ENCODE measurements at regions of chr19 and their contacts with region 1.

Region 1: GRCh38 chr19:57362997-57363705 is at the starts of genes TRAPPC2B and ZNF547:
- DNase-seq: peak; percentile 89 to 99 (median 98)
- ATAC-seq: peak; percentile 97
- H3K4me3 ChIP-seq: peak within 1 kb of the TSS; percentile 74
- H3K4me3 Mint-ChIP-seq: peak within 1 kb of the TSS; percentile 90 to 97 (median 94)
- H3K27ac ChIP-seq: peak within 1 kb of the TSS; percentile 84
- H3K27ac Mint-ChIP-seq: peak within 1 kb of the TSS; percentile 94 to 100 (median 97)
- H3K4me1 ChIP-seq: peaks cover 9 to 14% of the 10 kb centered on the region in 2 donors
- H3K4me1 Mint-ChIP-seq: peaks cover 12 to 26% (median 18%) of the 10 kb centered on the region in 7 donors
- H3K27me3 ChIP-seq: no peaks in the 10 kb centered on the region
- H3K27me3 Mint-ChIP-seq: peaks cover 0 to 2% (median 0%) of the 10 kb centered on the region in 5 donors
- total RNA-seq, gene TRAPPC2B: 7.7 to 11.8 (median 9.0) TPM
- total RNA-seq, gene ZNF547: 0.40 to 10.1 (median 3.6) TPM

Region 2: GRCh38 chr19:57191141-57192076 is 171.7 kb before region 1 on chr19 and contains the start of gene ZNF264:
- CTCF ChIA-PET with region 1: no interaction called
- POLR2A ChIA-PET with region 1: no interaction called
- intact Hi-C with region 1: loop called (anchors 1 kb)
- DNase-seq: peak; percentile 79 to 90 (median 86)
- ATAC-seq: peak; percentile 98
- H3K4me3 ChIP-seq: peak within 1 kb of the TSS; percentile 95
- H3K4me3 Mint-ChIP-seq: peak within 1 kb of the TSS; percentile 90 to 97 (median 94)
- H3K27ac ChIP-seq: peak within 1 kb of the TSS; percentile 85
- H3K27ac Mint-ChIP-seq: peak within 1 kb of the TSS; percentile 92 to 97 (median 95)
- H3K4me1 ChIP-seq: peaks cover 11 to 22% of the 10 kb centered on the region in 2 donors
- H3K4me1 Mint-ChIP-seq: peaks cover 20 to 40% (median 35%) of the 10 kb centered on the region in 7 donors
- H3K27me3 ChIP-seq: no peaks in the 10 kb centered on the region
- H3K27me3 Mint-ChIP-seq: peaks cover 0 to 11% (median 6%) of the 10 kb centered on the region in 5 donors
- total RNA-seq, gene ZNF264: 31.5 to 65.9 (median 44.3) TPM

Region 3: GRCh38 chr19:57350877-57351805 is 12.0 kb before region 1 on chr19 and contains the start of gene ZNF304:
- CTCF ChIA-PET with region 1: no interaction called
- POLR2A ChIA-PET with region 1: interaction called, 4 read pairs
- intact Hi-C with region 1: loop called (anchors 1 kb)
- DNase-seq: peak; percentile 51 to 85 (median 76)
- ATAC-seq: peak; percentile 100
- H3K4me3 ChIP-seq: peak within 1 kb of the TSS; percentile 83
- H3K4me3 Mint-ChIP-seq: peak within 1 kb of the TSS; percentile 93 to 97 (median 96)
- H3K27ac ChIP-seq: peak within 1 kb of the TSS; percentile 77
- H3K27ac Mint-ChIP-seq: peak within 1 kb of the TSS; percentile 80 to 96 (median 92)
- H3K4me1 ChIP-seq: peaks cover 11% of the 10 kb centered on the region in 2 donors
- H3K4me1 Mint-ChIP-seq: peaks cover 28 to 43% (median 32%) of the 10 kb centered on the region in 7 donors
- H3K27me3 ChIP-seq: no peaks in the 10 kb centered on the region
- H3K27me3 Mint-ChIP-seq: peaks cover 0 to 11% (median 7%) of the 10 kb centered on the region in 5 donors
- total RNA-seq, gene ZNF304: 6.0 to 12.5 (median 9.0) TPM

Region 4: GRCh38 chr19:57443120-57443696 is 80.1 kb after region 1 on chr19:
- CTCF ChIA-PET with region 1: no interaction called
- POLR2A ChIA-PET with region 1: no interaction called
- intact Hi-C with region 1: no loop called
- DNase-seq: no peak
- ATAC-seq: no peak
- H3K4me3 ChIP-seq: no peak overlapping the region
- H3K4me3 Mint-ChIP-seq: peak overlapping the region in 1 of 10 donors; percentile 19
- H3K27ac ChIP-seq: no peak overlapping the region
- H3K27ac Mint-ChIP-seq: no peak overlapping the region
- H3K4me1 ChIP-seq: no peaks in the 10 kb centered on the region
- H3K4me1 Mint-ChIP-seq: peaks cover 0 to 19% (median 16%) of the 10 kb centered on the region in 7 donors
- H3K27me3 ChIP-seq: no peaks in the 10 kb centered on the region
- H3K27me3 Mint-ChIP-seq: no peaks in the 10 kb centered on the region

Region 5: GRCh38 chr19:57477191-57478008 is 114.2 kb after region 1 on chr19 and contains the start of gene ZNF772:
- CTCF ChIA-PET with region 1: no interaction called
- POLR2A ChIA-PET with region 1: no interaction called
- intact Hi-C with region 1: loop called in 1 of 2 experiments (anchors 1 kb)
- DNase-seq: peak; percentile 55 to 96 (median 88)
- ATAC-seq: peak; percentile 99
- H3K4me3 ChIP-seq: peak within 1 kb of the TSS; percentile 80
- H3K4me3 Mint-ChIP-seq: peak within 1 kb of the TSS; percentile 87 to 95 (median 92)
- H3K27ac ChIP-seq: peak within 1 kb of the TSS; percentile 77
- H3K27ac Mint-ChIP-seq: peak within 1 kb of the TSS; percentile 84 to 96 (median 89)
- H3K4me1 ChIP-seq: peaks cover 5 to 12% of the 10 kb centered on the region in 2 donors
- H3K4me1 Mint-ChIP-seq: peaks cover 10 to 26% (median 19%) of the 10 kb centered on the region in 7 donors
- H3K27me3 ChIP-seq: no peaks in the 10 kb centered on the region
- H3K27me3 Mint-ChIP-seq: peaks cover 0 to 7% (median 0%) of the 10 kb centered on the region in 5 donors
- total RNA-seq, gene ZNF772: 1.5 to 20.5 (median 4.3) TPM

Region 6: DNA sequence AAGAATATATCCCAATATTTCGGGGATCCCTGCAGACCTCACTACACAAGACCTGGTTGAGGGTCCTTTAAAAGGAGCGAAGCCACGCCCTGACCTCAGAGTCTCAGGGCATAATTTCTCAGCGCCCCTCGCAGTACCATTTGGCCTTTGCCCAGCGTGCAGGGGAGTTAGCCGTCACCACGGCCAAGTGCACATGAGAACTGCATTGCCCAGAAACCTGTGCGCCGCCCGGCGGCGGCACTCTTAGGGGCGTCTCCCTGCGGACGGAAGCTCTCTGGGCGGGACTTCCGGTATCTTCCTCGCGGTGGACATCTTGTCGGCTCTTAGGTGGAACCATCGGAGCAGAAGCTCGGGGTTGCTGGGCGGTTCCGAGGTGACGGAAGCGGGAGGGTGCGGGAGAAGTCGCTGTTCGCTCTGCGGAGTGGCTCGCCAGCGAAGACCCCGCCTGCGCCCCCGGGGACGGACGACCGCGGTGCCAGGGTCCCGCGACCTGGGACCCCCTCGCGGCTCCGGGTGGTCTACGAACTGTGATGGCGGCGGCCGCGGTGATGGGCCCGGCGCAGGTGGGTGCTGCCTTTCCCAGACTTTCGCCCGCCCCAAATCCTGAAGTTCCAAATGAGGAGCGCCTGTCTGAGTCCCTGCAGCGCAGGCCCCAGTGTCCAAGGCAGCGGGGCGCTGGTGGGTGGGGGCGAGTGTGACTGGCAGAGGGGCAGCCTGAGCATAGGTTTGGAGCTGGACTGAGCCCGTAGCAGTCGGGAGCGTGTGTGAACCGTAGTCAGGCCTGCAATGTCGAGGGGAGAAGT is 251.0 kb after region 1 on chr19 and contains the start of gene ZNF134:
- CTCF ChIA-PET with region 1: no interaction called
- POLR2A ChIA-PET with region 1: no interaction called
- intact Hi-C with region 1: loop called in 1 of 2 experiments (anchors 1 kb)
- DNase-seq: peak; percentile 74 to 90 (median 84)
- ATAC-seq: peak; percentile 100
- H3K4me3 ChIP-seq: peak within 1 kb of the TSS; percentile 94
- H3K4me3 Mint-ChIP-seq: peak within 1 kb of the TSS; percentile 79 to 95 (median 90)
- H3K27ac ChIP-seq: peak within 1 kb of the TSS; percentile 76
- H3K27ac Mint-ChIP-seq: peak within 1 kb of the TSS; percentile 78 to 92 (median 86)
- H3K4me1 ChIP-seq: peaks cover 14 to 15% of the 10 kb centered on the region in 2 donors
- H3K4me1 Mint-ChIP-seq: peaks cover 18 to 43% (median 34%) of the 10 kb centered on the region in 7 donors
- H3K27me3 ChIP-seq: no peaks in the 10 kb centered on the region
- H3K27me3 Mint-ChIP-seq: no peaks in the 10 kb centered on the region
- total RNA-seq, gene ZNF134: 14.6 to 33.9 (median 25.7) TPM

Region 7: DNA sequence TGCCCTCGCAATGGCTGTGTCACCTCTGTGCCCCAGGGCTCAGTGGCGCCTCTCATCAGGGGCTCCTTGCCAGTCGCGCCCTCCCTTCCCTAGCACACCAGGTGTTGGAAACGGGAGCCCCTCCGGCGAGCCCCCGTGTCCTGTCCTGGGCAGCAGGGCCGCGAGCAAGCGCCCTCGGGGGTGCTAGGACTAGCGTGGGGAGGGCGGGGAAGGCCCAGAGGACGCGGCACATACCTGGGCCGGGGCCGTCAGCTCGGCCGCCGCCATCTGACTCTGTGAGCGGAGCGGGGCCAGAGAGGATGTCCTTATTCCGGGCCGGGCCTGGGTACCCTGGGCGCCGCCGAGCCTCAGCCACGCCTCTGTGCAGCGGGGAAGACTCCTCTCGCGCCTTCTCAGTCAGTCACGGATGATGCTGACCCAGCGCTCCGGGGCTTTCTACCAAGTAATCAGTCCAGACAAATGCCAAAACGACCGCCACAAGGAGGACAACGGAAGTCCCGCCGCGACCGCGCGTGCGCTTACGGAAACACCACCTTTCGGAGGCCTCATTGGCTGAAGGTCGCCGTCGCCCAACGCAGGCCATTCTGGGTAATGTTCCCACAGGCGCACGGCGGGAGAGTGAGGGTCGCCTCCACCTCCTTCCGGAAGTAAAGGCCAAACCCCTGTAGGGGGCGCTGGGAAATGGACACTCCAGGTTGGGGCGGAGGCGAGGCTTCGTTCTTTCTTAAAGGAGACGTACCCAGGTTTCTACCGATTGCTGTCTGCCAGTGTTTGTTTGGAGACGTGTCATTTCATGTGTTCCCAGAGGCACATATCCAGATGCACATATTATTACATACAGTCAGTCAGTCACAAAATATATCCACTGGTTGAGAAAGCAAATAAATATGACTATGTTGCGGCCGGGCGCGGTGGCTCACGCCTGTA is 584.3 kb after region 1 on chr19 and contains the start of gene ZNF256:
- CTCF ChIA-PET with region 1: no interaction called
- POLR2A ChIA-PET with region 1: no interaction called
- intact Hi-C with region 1: loop called in 1 of 2 experiments (anchors 5 kb)
- DNase-seq: peak; percentile 55 to 85 (median 77)
- ATAC-seq: peak; percentile 97
- H3K4me3 ChIP-seq: peak within 1 kb of the TSS; percentile 71
- H3K4me3 Mint-ChIP-seq: peak within 1 kb of the TSS; percentile 89 to 97 (median 95)
- H3K27ac ChIP-seq: peak within 1 kb of the TSS; percentile 80
- H3K27ac Mint-ChIP-seq: peak within 1 kb of the TSS; percentile 83 to 97 (median 92)
- H3K4me1 ChIP-seq: peaks cover 6 to 9% of the 10 kb centered on the region in 2 donors
- H3K4me1 Mint-ChIP-seq: peaks cover 10 to 28% (median 21%) of the 10 kb centered on the region in 7 donors
- H3K27me3 ChIP-seq: no peaks in the 10 kb centered on the region
- H3K27me3 Mint-ChIP-seq: peaks cover 0 to 4% (median 0%) of the 10 kb centered on the region in 5 donors
- total RNA-seq, gene ZNF256: 5.2 to 13.8 (median 11.8) TPM

Region 8: DNA sequence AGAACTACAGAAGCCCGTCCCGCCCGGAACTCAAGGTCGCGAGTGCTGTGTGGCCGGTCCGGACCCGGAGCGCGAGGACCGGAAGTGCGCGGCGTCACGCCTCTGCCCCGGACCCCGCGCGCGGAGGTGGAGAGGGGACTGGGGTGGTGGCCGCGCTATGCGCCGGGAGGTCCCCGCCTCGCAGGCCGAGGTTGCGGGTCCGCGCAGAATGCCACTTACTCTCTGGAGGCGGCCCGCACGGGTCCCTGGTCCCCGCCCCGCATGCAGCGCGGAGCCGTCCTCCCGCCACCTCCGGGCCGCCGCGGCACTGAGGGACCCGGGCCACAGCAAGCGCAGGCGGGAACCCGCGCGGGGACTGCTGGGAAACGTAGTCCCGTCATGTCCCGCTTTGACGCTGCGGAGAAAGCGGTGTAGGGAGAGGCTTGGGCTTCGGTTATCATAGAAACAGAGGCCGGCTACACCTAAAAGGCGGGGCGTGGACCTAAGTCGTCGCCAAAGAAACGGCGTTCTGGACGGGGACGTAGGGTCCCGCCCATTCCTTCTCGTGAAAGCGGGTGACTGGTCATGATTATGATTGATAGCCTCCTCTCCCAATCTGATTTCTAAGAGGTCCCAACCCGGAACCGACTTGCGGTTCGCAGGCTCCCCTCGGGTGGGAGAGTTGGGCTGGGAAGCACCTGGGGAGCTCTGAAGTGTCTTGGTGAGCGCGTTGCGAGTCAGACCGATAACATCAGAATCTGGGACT is 1017.7 kb after region 1 on chr19 and contains the start of gene ZNF837:
- CTCF ChIA-PET with region 1: no interaction called
- POLR2A ChIA-PET with region 1: no interaction called
- intact Hi-C with region 1: loop called in 1 of 2 experiments (anchors 1 kb)
- DNase-seq: peak; percentile 90 to 100 (median 98)
- ATAC-seq: peak; percentile 93
- H3K4me3 ChIP-seq: peak within 1 kb of the TSS; percentile 97
- H3K4me3 Mint-ChIP-seq: peak within 1 kb of the TSS; percentile 87 to 98 (median 91)
- H3K27ac ChIP-seq: peak within 1 kb of the TSS; percentile 96
- H3K27ac Mint-ChIP-seq: peak within 1 kb of the TSS; percentile 93 to 97 (median 97)
- H3K4me1 ChIP-seq: peaks cover 21 to 25% of the 10 kb centered on the region in 2 donors
- H3K4me1 Mint-ChIP-seq: peaks cover 23 to 40% (median 34%) of the 10 kb centered on the region in 7 donors
- H3K27me3 ChIP-seq: no peaks in the 10 kb centered on the region
- H3K27me3 Mint-ChIP-seq: no peaks in the 10 kb centered on the region
- total RNA-seq, gene ZNF837: 1.4 to 4.3 (median 2.4) TPM

Measured in naive thymus-derived CD4-positive, alpha-beta T cell (primary cell).